ENCODE measurements at regions of chr2 and their contacts with region 1.

Region 1: GRCh38 chr2:237474931-237475703 is 11.9 kb upstream of the MLPH start:
- DNase-seq: peak; percentile 48
- H3K4me3 ChIP-seq: peak overlapping the region; percentile 49 to 64 (median 51)
- H3K27ac ChIP-seq: peak overlapping the region; percentile 70
- H3K4me1 ChIP-seq: peaks cover 20% of the 10 kb centered on the region
- H3K27me3 ChIP-seq: no peaks in the 10 kb centered on the region
- CTCF ChIP-seq: peak; percentile 43 to 96

Region 2: DNA sequence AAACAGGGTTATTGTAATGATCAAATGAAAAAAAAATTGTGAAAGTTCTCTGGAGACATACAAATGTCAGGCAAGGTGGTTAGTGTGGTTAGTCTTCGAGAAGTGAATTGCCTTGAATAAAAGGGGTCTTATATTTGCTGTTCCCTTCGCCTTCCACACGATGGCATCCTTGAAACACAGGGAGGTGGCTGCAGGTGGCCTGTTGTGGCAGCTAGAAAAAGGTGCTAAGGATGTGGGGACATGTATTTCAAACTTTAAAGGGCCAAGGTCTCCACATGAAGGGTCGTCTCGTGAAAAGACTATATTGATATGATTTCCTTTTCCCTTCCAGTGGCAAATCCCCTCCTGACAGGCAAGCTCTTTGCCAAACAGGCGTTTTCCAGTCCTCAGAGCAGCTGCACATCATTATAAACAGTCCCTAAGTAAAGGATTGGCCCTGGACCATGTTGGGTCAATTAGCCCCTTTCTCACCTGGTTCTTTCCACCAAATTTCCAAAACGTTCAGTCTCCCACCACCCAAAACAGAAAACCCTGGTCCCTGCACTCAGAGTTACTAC is 321.0 kb before region 1 on chr2:
- CTCF ChIA-PET with region 1: no interaction called
- dilution Hi-C with region 1: no loop called
- in situ Hi-C with region 1: no loop called
- intact Hi-C with region 1: loop called (anchors 1 kb)
- DNase-seq: peak; percentile 37
- H3K4me3 ChIP-seq: no peak overlapping the region
- H3K27ac ChIP-seq: no peak overlapping the region
- H3K4me1 ChIP-seq: peaks cover 9% of the 10 kb centered on the region
- H3K27me3 ChIP-seq: no peaks in the 10 kb centered on the region
- CTCF ChIP-seq: peak; percentile 64 to 67

Region 3: DNA sequence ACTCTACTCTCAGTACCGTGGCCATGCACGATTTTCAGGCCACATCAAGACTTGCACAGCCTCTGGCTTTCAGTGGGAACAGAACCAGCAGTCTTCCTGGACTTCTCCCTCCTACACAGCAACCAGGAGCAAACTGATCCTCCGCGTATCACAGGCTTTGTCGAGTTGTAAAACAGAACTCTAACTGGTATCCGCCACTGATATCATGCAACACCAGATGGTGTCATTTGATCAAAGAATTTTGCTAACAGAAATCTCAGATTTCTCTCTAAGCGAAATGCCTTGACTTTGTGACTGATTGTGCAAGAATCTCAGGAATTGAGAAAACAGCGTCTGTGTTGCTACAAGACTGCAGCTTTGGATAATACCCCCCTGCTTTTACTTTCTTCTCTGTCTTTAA is 303.7 kb before region 1 on chr2:
- CTCF ChIA-PET with region 1: no interaction called
- dilution Hi-C with region 1: no loop called
- in situ Hi-C with region 1: no loop called
- intact Hi-C with region 1: loop called (anchors 2 kb)
- DNase-seq: peak; percentile 63
- H3K4me3 ChIP-seq: no peak overlapping the region
- H3K27ac ChIP-seq: no peak overlapping the region
- H3K4me1 ChIP-seq: peaks cover 2% of the 10 kb centered on the region
- H3K27me3 ChIP-seq: no peaks in the 10 kb centered on the region
- CTCF ChIP-seq: peak; percentile 22 to 44

Region 4: DNA sequence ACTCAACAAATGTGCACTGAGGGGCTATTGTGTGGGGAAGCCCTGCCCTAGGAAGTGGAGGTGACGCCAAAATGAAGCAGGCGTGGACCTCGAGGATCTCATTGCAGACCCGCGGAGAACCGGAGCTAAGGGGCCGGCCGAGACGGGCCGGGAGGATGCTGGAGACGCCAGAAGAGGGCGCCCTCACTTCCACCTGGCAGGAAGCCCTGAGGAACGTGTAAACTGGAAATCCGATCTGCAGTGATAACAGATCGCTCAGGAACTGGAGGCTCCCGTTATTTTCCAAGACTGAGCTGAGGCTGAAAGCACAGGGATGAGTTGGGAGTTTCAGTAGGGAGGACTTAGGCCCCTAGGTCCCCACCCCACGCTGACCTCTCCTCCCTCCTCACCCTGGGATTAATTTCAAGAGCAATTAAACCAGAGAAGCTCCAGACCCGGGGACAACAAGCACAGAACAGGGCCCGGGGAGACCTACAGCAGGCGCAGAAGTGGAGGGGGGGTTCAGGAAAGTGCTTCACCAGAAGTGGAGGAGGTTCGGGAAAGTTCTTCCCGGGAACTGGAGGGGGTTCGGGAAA is 53.5 kb before region 1 on chr2:
- CTCF ChIA-PET with region 1: interaction called, 6 read pairs
- dilution Hi-C with region 1: no loop called
- in situ Hi-C with region 1: no loop called
- intact Hi-C with region 1: loop called (anchors 1 kb)
- DNase-seq: peak; percentile 59
- H3K4me3 ChIP-seq: no peak overlapping the region
- H3K27ac ChIP-seq: no peak overlapping the region
- H3K4me1 ChIP-seq: peaks cover 9% of the 10 kb centered on the region
- H3K27me3 ChIP-seq: no peaks in the 10 kb centered on the region
- CTCF ChIP-seq: peak; percentile 65 to 87

Region 5: GRCh38 chr2:237512774-237513466 is 37.8 kb after region 1 on chr2:
- CTCF ChIA-PET with region 1: no interaction called
- dilution Hi-C with region 1: no loop called
- in situ Hi-C with region 1: no loop called
- intact Hi-C with region 1: loop called (anchors 1 kb)
- DNase-seq: peak; percentile 61
- H3K4me3 ChIP-seq: no peak overlapping the region
- H3K27ac ChIP-seq: no peak overlapping the region
- H3K4me1 ChIP-seq: no peaks in the 10 kb centered on the region
- H3K27me3 ChIP-seq: no peaks in the 10 kb centered on the region
- CTCF ChIP-seq: peak; percentile 71 to 91

Measured in mammary epithelial cell (primary cell).